GM10248 (cell line): ENCODE measurements at regions of chr9 and their contacts with region 1.

Region 1: DNA sequence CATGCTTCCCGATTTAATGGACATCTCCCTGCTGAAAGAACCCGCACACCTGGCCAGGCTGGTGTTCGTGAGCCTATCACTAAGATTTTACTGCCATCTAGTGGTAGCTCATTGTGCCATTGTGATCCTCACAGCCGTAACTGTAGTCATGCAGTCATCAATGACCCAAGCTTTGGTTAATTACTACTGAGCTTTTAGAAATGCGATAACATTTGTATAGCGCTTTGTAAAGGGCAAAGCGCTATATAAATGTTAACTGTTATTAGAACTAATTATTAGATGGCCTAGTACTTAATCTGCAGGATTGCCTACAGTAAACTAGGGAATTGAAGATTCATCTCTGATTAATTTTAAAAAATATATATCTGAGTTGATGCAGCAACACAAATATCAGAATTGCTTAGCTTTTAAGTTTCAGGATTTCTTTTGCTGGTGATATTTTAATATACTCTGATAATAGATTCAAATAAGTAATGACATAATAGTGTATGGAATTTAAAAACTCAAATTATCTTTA is 90.2 kb downstream of the HACD4 start:
- DNase-seq: peak; percentile 60
- CTCF ChIP-seq: peak; percentile 72

Region 2: DNA sequence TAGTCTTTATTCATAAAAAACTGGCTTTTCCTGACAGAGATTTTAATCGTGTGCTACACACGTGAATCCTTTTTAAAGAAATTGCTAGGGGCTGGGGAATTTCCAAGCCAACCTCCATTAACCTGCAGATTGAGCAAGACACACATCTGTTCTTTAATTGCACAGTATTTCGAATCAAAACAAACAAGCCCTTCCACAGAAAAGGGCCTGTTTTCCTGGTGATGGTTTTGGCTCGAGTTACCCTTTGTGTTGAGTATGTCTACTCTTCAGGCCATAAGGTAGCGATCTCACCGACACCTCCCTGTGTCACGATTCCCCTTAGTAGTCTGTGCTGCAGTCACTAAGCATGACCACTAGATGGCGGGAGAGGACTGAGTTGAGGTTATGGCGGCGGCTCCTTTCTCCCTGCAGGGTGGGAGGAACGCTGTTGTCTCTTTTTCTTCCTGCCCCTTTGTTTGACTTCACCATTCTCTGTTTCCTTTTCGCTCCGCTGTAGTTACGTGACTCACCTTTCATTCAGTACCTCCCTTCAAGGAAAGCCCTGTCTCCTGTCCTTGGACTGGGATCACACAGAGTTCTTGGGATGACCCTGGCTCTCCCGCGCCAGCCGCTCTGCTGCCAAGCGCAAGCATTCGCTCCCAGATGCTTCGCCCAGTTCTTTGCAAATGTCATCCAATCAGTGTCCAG is 1015.3 kb before region 1 on chr9:
- CTCF ChIA-PET with region 1: interaction called, 21 read pairs
- POLR2A ChIA-PET with region 1: no interaction called
- DNase-seq: peak; percentile 82
- CTCF ChIP-seq: peak; percentile 96

Region 3: DNA sequence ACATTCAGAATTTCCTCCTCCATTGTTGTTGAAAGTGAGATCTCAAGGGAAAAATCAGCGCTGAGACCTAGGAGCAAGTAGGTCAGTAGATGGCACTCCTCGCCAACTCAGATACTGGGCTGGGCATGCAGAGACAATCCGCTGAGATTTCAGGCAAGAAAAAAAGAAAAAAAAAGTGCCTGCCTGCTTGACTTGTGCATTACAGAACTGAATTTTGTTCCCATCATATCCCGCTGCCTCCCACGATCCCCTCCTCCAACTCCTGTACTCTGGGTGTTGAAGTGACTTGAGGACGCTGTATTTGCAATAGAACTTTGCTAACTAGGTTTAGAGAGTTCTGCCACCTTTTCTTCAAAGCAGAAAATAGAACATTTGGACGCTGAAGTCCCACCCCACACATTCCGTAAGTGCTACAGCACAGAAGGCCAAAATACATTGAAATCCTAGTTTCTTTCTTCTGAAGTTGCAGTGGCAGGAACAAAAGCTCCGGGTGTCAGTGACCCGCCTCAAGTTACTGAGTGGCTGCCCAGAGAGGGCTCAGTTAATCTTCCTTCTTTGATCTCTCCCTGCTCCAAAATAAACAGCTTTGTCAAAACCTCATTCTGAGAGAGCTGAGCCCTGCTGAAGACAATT is 584.7 kb before region 1 on chr9:
- CTCF ChIA-PET with region 1: interaction called, 16 read pairs
- POLR2A ChIA-PET with region 1: no interaction called
- DNase-seq: peak; percentile 54
- CTCF ChIP-seq: peak; percentile 75

Region 4: DNA sequence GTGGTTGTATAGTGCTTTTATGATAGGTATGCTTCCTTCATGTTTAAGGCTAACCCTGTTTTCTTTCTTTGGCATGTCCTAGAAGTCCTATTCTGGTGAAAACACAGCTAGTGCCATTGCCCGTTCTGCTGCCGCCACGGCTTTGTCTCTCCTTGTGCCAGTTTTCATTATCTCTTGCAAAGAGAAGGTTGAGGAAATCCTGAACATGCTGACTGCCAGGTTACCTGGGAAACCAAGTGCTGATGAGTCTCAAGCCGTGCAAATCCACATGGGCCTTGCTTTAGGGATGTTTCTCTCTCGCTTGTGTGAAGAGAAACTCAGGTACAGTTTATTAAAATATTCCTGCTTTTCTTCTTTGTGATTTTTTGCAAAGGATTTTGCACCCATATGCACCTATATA is 12.0 kb before region 1 on chr9:
- CTCF ChIA-PET with region 1: interaction called, 17 read pairs
- POLR2A ChIA-PET with region 1: no interaction called
- DNase-seq: no peak
- CTCF ChIP-seq: no peak

Region 5: GRCh38 chr9:20962536-20963225 is 21.4 kb after region 1 on chr9:
- CTCF ChIA-PET with region 1: interaction called, 11 read pairs
- POLR2A ChIA-PET with region 1: no interaction called
- DNase-seq: no peak
- CTCF ChIP-seq: no peak

Region 6: GRCh38 chr9:21104787-21105186 is 163.6 kb after region 1 on chr9:
- CTCF ChIA-PET with region 1: interaction called, 10 read pairs
- POLR2A ChIA-PET with region 1: no interaction called
- DNase-seq: no peak
- CTCF ChIP-seq: no peak